ENCODE measurements at regions of chr2 and their contacts with region 1.

Region 1: GRCh38 chr2:117639401-117639800 is 175.1 kb upstream of the DDX18 start:
- DNase-seq: no peak
- H3K4me3 ChIP-seq: no peak overlapping the region
- H3K27ac ChIP-seq: no peak overlapping the region
- H3K4me1 ChIP-seq: no peaks in the 10 kb centered on the region
- H3K27me3 ChIP-seq: no peaks in the 10 kb centered on the region
- CTCF ChIP-seq: no peak
- POLR2A ChIP-seq: no peak

Region 2: GRCh38 chr2:117485588-117485987 is 153.8 kb before region 1 on chr2:
- intact Hi-C with region 1: no loop called
- DNase-seq: no peak
- H3K4me3 ChIP-seq: no peak overlapping the region
- H3K27ac ChIP-seq: no peak overlapping the region
- H3K4me1 ChIP-seq: no peaks in the 10 kb centered on the region
- H3K27me3 ChIP-seq: no peaks in the 10 kb centered on the region
- CTCF ChIP-seq: no peak
- POLR2A ChIP-seq: no peak

Region 3: DNA sequence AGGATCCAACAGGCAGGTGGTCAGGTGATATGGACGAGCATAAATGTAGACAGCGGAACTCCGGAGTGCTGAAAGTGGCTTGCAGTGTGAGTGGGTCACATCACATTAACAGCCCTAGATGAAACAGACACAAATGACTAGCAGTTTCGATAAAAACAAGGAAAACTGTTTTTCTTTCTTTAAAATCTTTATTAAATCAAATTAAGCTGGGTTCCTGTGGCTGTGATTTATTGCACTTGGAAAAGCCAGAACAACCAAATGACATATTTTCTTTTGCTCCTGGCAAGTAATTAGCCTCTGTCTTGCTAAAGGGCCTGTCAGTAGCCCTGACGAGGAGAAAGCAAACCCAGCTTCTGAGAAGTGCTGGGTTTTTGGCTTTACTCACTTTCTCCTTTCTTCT is 22.2 kb after region 1 on chr2:
- intact Hi-C with region 1: loop called (anchors 2 kb)
- DNase-seq: no peak
- H3K4me3 ChIP-seq: no peak overlapping the region
- H3K27ac ChIP-seq: no peak overlapping the region
- H3K4me1 ChIP-seq: no peaks in the 10 kb centered on the region
- H3K27me3 ChIP-seq: no peaks in the 10 kb centered on the region
- CTCF ChIP-seq: no peak
- POLR2A ChIP-seq: no peak

Region 4: GRCh38 chr2:118576109-118576855 is 936.9 kb after region 1 on chr2:
- intact Hi-C with region 1: no loop called
- DNase-seq: no peak
- H3K4me3 ChIP-seq: no peak overlapping the region
- H3K27ac ChIP-seq: no peak overlapping the region
- H3K4me1 ChIP-seq: no peaks in the 10 kb centered on the region
- H3K27me3 ChIP-seq: no peaks in the 10 kb centered on the region
- CTCF ChIP-seq: no peak
- POLR2A ChIP-seq: no peak